Dorsolateral prefrontal cortex (tissue), 120 donors: ENCODE measurements at regions of chr9 and their contacts with region 1.

Region 1: GRCh38 chr9:128412120-128412790 is 8.4 kb upstream of the CERCAM start:
- DNase-seq: peak; percentile 34 to 98 (median 93)
- H3K4me3 ChIP-seq: peak overlapping the region; percentile 3 to 70 (median 48)
- H3K27ac ChIP-seq: peak overlapping the region in 58 of 59 donors; percentile 76 to 100 (median 97)
- H3K27me3 ChIP-seq: peaks cover 0 to 3% (median 0%) of the 10 kb centered on the region in 45 donors
- CTCF ChIP-seq: peak; percentile 25 to 90 (median 78)

Region 2: DNA sequence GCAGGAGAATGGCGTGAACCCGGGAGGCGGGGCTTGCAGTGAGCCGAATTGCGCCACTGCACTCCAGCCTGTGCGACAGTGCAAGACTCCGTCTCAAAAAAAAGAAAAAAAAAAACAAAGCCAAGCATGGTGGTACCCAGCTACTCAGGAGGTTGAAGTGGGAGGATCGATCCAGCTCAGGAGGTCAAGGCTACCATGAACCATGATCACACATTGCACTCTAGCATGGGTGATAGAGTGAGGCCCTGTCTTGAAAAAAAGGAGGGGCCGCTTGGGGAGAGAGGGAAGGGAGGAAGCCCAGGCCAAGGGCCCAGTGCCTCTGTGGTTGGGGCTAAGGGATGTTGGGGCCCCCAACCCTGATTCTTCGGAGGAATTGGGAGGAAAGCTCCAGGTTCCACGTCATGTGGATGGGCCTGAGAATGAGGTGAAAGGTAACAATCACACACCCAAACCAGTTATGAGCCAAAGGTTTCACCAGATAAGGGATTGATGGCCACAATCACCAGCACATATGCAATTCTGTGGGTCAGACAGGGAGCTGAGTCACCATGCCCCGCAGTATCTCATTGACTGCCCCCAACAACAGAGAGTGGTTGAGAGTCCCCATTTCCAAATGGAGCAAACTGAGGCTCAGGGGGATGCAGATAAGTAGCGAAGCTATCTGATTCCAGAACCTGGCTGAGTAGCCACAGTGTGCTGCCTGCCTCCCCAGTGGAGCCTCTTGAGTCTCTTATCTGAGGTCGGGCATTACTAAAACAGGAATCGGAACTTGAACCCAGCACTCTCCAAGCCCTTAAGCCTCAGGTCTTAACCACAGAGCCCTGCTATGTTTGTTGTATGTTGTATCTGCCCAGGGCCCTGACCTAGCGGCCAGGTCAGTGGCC is 115.7 kb before region 1 on chr9:
- intact Hi-C with region 1: loop called in 1 of 2 experiments (anchors 2 kb)
- DNase-seq: no peak
- H3K4me3 ChIP-seq: no peak overlapping the region
- H3K27ac ChIP-seq: peak overlapping the region in 4 of 59 donors; percentile 3 to 76 (median 33)
- H3K27me3 ChIP-seq: no peaks in the 10 kb centered on the region
- CTCF ChIP-seq: no peak

Region 3: DNA sequence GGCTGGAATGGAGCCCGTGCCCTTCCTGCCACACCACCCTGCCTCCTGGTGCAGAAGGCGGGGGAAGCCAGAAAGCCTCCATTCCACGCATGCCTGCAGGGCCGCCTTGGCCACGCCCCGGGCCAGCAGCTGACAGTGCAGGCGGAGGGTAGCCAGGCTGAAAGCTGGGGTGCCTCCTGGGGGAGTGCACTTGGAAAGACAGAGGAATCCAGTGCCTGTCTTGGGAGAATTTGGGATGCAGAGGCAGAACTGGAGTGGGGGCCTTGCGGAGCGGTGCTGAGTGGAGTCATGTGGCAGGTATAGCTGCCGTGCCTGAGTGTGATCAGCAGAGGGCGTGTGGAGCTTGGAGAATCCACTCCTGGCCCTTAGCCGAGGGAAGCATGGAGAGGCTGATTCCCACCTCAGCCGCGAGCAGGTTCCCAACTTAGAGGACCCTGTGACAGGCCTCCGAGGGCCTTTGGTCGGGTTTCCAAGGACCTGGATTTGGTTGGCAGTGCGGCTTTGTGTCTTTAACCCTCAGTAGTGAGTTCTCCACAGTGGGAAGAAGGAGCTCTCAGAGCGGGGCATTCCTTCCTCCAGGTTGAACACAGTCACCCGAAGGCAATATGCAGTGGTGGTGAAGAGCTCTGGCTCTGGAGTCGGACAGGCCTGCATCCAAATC is 50.1 kb before region 1 on chr9:
- intact Hi-C with region 1: loop called (anchors 1 kb)
- DNase-seq: peak; percentile 76 to 93 (median 91)
- H3K4me3 ChIP-seq: peak overlapping the region in 58 of 59 donors; percentile 12 to 67 (median 48)
- H3K27ac ChIP-seq: peak overlapping the region; percentile 44 to 100 (median 95)
- H3K27me3 ChIP-seq: no peaks in the 10 kb centered on the region
- CTCF ChIP-seq: peak; percentile 70 to 99 (median 96)

Region 4: DNA sequence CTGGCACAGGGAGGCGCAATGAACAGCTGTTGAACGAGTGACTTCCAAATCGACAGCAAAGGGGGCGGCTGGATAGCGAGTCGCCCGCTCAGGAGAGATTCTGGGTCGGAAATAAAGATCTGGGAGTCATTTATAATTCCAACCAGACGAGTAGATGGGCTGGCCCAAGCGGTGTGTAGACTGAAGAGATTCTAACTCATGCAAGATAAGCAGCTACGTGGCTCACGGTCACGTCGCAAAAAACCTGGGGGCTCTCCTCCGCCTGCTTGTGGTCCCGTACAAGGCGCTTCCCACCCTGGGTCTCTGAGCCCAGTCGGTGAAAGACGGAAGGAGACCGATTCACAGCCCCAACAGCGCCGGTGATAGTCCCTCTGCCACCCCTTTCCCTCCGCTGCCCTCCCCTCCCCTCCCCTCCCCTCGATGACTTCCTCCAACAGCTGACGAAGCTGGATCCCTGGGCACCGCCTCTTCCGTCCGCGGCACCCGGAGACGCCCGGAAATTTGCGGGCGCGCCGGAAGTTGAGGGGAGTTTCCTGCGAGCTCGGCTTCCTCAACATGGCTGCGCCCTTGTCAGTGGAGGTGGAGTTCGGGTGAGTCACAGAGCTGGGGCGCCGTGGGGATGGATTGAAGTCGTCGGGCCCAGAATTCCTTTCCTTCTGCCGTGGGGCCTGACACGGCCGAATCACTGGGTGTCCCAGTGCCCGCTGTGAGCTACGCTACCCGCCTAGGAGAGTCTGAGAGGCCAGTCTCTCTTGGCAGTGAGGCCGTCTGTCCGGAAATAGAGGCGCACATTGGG is 41.2 kb before region 1 on chr9 and contains the start of gene URM1:
- intact Hi-C with region 1: loop called (anchors 1 kb)
- DNase-seq: peak; percentile 95 to 99 (median 96)
- H3K4me3 ChIP-seq: peak within 1 kb of the TSS; percentile 59 to 98 (median 89)
- H3K27ac ChIP-seq: peak within 1 kb of the TSS; percentile 83 to 100 (median 98)
- H3K27me3 ChIP-seq: no peaks in the 10 kb centered on the region
- CTCF ChIP-seq: peak in 28 of 56 donors; percentile 3 to 43 (median 18)
- total RNA-seq, gene URM1: 36.9 to 64.9 (median 48.8) TPM

Region 5: GRCh38 chr9:128393171-128393775 is 19.0 kb before region 1 on chr9:
- intact Hi-C with region 1: loop called (anchors 1 kb)
- DNase-seq: peak; percentile 30 to 92 (median 88)
- H3K4me3 ChIP-seq: peak overlapping the region in 58 of 59 donors; percentile 36 to 96 (median 66)
- H3K27ac ChIP-seq: peak overlapping the region; percentile 40 to 100 (median 98)
- H3K27me3 ChIP-seq: no peaks in the 10 kb centered on the region
- CTCF ChIP-seq: peak in 6 of 56 donors; percentile 3 to 24 (median 11)